Activated T-helper 2 cell treated with anti-CD3 and anti-CD28 coated beads, Interferon-gamma antibody, Interleukin-2, Interleukin-4, amounts not matched to agents 10 μg/mL and 5 μg/mL and 100 μg/mL, durations not matched to agents 14 hours and 24 hours and 36 hours (primary cell): ENCODE measurements at regions of chr2 and their contacts with region 1.

Region 1: GRCh38 chr2:8681786-8682692 is at the start of gene ID2:
- DNase-seq: peak; percentile 99
- H3K4me3 Mint-ChIP-seq: peak within 1 kb of the TSS; percentile 100
- H3K27ac Mint-ChIP-seq: peak within 1 kb of the TSS; percentile 98
- H3K4me1 Mint-ChIP-seq: peaks cover 28% of the 10 kb centered on the region
- H3K27me3 Mint-ChIP-seq: peaks cover 10% of the 10 kb centered on the region
- total RNA-seq, gene ID2: 423 and 431 TPM in 2 replicates

Region 2: GRCh38 chr2:7097348-7097895 is 1584.6 kb before region 1 on chr2:
- intact Hi-C with region 1: loop called (anchors 5 kb)
- DNase-seq: peak; percentile 54
- H3K4me3 Mint-ChIP-seq: peak overlapping the region; percentile 33
- H3K27ac Mint-ChIP-seq: peak overlapping the region; percentile 0
- H3K4me1 Mint-ChIP-seq: peaks cover 8% of the 10 kb centered on the region
- H3K27me3 Mint-ChIP-seq: no peaks in the 10 kb centered on the region

Region 3: DNA sequence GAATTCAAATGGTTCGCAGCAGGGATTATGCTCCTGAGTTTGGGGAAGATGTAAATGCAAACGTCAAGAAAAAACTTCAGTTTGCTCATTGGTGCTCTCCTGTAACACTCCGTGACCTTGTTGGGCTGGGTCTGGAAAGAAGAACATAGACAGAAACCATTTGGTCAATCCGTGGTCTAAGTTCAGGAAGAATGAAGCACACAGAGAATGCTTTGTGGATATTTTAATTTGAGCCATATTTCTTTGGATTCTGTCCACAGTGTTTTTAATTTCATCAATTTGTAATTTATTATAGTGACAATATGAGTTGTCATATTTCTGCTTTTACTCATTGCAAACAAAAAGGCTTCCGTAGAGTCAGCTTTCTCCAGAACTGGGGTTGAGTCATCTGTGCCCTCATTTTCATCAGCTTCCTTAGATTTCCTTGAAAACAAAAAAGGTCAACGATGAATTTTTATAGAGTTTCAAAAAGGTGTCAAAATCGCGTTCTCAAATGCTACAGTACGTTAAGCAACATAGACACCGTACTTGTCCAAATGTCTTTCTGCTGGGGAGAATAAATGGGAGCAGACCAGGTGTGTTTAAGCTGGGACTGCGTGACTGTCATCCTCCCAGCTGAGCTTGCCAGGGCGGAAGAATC is 1158.4 kb before region 1 on chr2:
- intact Hi-C with region 1: loop called (anchors 10 kb)
- DNase-seq: no peak
- H3K4me3 Mint-ChIP-seq: peak overlapping the region; percentile 46
- H3K27ac Mint-ChIP-seq: peak overlapping the region; percentile 88
- H3K4me1 Mint-ChIP-seq: peaks cover 69% of the 10 kb centered on the region
- H3K27me3 Mint-ChIP-seq: no peaks in the 10 kb centered on the region

Region 4: DNA sequence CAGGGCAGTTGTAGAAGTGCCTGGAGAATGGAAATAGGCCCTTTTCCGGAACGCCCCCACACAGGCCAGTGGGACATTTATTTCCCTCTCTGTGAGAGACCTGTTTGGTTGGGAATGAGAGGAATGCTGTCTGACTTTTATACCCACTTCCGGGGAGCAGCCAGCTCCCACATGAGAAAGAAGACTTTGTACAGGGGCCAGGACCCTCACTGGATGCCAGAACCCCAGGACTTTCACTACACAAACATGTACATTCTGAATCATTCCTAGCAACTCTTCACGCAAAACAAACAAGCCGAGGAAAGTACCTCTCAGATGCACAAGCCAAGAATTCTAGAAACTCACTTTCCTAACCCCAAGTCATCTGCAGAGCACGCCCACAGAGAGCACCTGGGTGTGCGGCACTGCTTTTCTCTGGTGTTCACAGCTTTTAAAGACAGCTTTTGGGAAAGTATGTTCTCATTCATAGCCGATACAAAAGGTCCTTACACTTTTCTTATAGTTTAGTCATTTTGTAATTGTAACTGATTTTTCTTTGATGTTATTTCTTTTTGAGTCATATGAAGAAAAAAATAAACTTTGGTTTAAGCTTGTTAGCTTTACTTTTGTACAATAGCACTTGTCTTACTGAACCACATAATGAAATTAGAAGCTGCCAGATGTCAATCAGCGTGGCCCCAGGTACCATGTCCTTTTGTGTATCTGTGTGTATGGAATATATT is 856.3 kb before region 1 on chr2:
- intact Hi-C with region 1: loop called (anchors 5 kb)
- DNase-seq: peak; percentile 46
- H3K4me3 Mint-ChIP-seq: peak overlapping the region; percentile 31
- H3K27ac Mint-ChIP-seq: peak overlapping the region; percentile 94
- H3K4me1 Mint-ChIP-seq: peaks cover 43% of the 10 kb centered on the region
- H3K27me3 Mint-ChIP-seq: no peaks in the 10 kb centered on the region

Region 5: DNA sequence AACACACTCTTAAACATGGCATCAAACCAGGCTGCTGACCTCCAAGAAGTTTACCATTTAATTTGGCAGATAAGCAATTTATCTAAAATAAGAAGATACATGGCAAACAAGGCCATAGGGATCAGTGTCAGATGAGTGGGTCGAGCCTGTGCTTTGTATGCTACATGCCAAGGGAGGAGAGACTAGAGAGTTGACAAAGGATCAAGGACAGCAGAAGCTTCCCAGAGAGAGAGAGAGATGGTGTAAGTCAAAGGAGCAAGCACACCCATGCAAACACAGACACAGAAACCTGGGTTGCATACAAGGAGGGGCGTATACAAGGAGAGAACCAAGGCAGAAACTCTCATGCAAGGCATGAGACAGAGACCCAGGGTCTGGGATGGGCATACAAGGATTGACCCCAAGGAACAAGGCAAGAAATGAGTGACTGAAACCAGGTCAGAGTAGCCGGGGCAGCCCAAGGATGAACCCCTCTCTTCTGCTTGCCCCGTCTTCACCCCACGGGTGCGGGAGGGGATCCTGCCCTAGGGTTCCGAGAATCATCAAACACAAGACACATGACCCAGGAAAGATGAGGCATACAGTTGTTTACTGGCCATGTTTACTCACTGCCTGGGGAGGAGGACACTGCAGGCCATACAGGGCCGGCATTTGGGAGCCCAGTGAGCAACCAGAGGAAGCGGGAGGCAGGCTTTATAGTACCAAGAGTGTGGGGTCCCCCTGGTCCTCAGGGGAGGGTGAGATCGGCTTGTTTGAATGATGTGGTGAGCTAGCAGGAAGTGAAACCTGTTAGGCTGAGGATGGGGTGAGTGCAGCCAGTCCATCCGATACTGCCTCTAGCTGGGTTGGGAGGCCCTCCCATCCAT is 529.4 kb before region 1 on chr2:
- intact Hi-C with region 1: loop called (anchors 1 kb)
- DNase-seq: no peak
- H3K4me3 Mint-ChIP-seq: no peak overlapping the region
- H3K27ac Mint-ChIP-seq: no peak overlapping the region
- H3K4me1 Mint-ChIP-seq: peaks cover 42% of the 10 kb centered on the region
- H3K27me3 Mint-ChIP-seq: no peaks in the 10 kb centered on the region

Region 6: GRCh38 chr2:8477552-8478470 is 204.2 kb before region 1 on chr2:
- intact Hi-C with region 1: loop called (anchors 5 kb)
- DNase-seq: no peak
- H3K4me3 Mint-ChIP-seq: peak overlapping the region; percentile 5
- H3K27ac Mint-ChIP-seq: peak overlapping the region; percentile 72
- H3K4me1 Mint-ChIP-seq: peaks cover 79% of the 10 kb centered on the region
- H3K27me3 Mint-ChIP-seq: no peaks in the 10 kb centered on the region

Region 7: DNA sequence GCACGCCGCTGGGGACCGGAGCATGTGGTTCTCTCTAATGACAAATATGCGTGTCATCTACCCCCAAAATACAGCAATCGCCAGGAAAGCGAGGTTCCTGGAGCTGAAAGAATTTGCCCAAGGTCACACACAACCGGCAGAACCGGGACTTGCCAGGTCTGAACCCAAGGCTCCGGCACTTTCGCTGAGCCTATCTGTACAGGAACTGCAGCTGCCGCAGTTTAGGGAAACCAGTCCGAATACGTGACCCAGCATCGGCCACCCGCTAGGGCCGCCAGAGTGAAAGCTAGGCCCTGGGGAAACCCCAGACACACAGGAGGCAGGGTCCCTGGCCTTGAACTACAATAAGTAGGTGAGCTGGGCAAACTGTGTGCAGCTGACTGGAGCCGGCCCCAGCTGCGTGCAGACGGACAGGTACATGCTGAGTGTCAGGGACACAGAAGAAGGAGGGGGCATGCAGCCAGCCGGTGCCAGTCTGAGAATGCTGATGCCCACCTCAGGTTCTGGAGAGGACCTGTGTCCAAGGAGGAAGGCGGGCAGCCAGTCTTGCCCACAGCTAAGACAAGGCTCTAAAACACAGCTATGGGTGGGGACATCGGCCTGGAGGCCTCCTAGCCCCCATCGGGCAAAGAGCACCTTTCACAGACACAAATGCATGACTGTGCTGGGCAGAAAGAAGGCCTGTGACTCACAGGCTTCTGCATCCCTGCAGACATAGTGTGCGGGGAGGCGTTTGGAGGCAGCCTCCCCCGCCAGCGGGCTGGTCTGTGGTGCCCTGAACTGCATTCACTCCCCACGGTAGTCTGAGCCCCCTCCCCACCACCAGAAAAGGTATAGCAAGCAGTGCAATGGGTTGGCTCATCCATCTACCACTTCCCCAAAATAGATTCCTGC is 107.6 kb before region 1 on chr2:
- intact Hi-C with region 1: no loop called
- DNase-seq: no peak
- H3K4me3 Mint-ChIP-seq: no peak overlapping the region
- H3K27ac Mint-ChIP-seq: no peak overlapping the region
- H3K4me1 Mint-ChIP-seq: peaks cover 28% of the 10 kb centered on the region
- H3K27me3 Mint-ChIP-seq: peaks cover 3% of the 10 kb centered on the region

Region 8: GRCh38 chr2:8704906-8705305 is 22.9 kb after region 1 on chr2:
- intact Hi-C with region 1: no loop called
- DNase-seq: no peak
- H3K4me3 Mint-ChIP-seq: no peak overlapping the region
- H3K27ac Mint-ChIP-seq: no peak overlapping the region
- H3K4me1 Mint-ChIP-seq: no peaks in the 10 kb centered on the region
- H3K27me3 Mint-ChIP-seq: no peaks in the 10 kb centered on the region